Calu3 (cell line): ENCODE measurements at regions of chr12 and their contacts with region 1.

Region 1: DNA sequence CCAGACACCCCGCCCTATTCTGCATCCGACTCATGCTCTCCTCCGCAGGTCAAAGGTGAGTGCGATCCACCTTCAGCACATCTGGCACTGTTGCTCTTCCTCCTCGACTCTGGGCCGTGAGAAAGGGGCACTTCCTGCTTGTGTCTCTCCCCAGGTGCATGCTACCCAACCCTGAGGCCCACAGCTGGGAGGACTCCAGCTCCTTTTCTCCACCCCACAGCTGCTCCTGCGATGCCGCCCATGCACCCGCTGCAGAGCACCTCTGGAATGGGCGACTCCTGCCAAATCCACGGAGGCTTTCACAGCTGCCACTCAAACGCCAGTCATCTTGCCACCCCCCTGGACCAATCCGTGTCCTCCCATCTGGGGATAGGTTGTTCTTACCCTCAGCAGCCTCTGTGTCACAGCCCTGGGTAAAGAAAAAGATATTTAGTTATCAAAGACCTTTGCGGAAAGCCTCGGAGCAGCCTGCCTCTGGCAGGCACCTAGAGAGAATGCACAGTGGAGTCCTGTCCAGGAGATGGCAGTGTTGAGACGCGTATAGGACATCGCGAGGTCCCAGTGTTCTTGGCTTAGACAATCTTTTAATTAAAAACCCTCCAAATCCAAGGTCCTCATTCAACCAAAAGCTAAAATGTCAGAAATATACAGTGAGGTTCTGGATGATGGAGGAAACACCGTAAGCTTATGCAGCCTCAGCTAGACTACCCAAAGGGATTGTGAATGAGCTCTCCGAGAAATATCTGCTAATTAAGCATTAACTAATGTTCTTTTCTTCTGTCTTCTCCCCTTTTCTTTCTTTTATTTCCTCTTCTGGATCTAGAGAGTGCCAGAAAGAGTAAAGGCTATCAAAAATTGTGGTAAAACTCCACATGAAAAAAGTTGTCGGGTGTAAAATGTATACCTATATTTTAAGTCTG is 54.3 kb downstream of the MYRFL start:
- DNase-seq: peak; percentile 81
- H3K4me3 Mint-ChIP-seq: peak overlapping the region; percentile 71
- H3K27ac Mint-ChIP-seq: peak overlapping the region; percentile 59
- H3K4me1 Mint-ChIP-seq: peaks cover 22% of the 10 kb centered on the region
- H3K27me3 Mint-ChIP-seq: no peaks in the 10 kb centered on the region
- CTCF ChIP-seq: peak; percentile 93

Region 2: DNA sequence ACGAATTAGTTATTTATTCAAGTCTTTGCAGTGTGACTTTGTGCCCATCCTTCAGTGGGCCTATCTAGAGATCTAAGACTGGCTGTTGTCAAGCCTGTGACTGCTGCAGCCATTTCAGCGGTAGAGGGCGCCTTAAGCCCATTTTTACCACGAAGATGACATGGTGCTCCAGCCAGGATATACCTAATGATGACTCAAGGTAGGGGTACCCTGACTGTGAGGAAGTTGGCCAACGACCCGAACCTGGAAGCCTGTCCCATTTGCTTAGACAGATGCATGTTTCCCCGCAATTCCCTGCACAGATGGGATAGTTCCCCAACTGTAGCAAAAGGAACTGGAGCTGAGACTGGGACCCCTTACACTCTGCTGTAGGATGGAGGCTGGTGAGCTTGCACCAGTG is 99.4 kb before region 1 on chr12:
- CTCF ChIA-PET with region 1: interaction called, 4 read pairs
- intact Hi-C with region 1: loop called (anchors 5 kb)
- DNase-seq: peak; percentile 74
- H3K4me3 Mint-ChIP-seq: no peak overlapping the region
- H3K27ac Mint-ChIP-seq: no peak overlapping the region
- H3K4me1 Mint-ChIP-seq: peaks cover 43% of the 10 kb centered on the region
- H3K27me3 Mint-ChIP-seq: no peaks in the 10 kb centered on the region
- CTCF ChIP-seq: peak; percentile 74

Region 3: GRCh38 chr12:70365648-70366518 is 486.6 kb after region 1 on chr12 and contains the start of gene KCNMB4:
- CTCF ChIA-PET with region 1: no interaction called
- intact Hi-C with region 1: loop called (anchors 5 kb)
- DNase-seq: peak; percentile 93
- H3K4me3 Mint-ChIP-seq: peak within 1 kb of the TSS; percentile 99
- H3K27ac Mint-ChIP-seq: peak within 1 kb of the TSS; percentile 86
- H3K4me1 Mint-ChIP-seq: peaks cover 18% of the 10 kb centered on the region
- H3K27me3 Mint-ChIP-seq: no peaks in the 10 kb centered on the region
- CTCF ChIP-seq: no peak
- total RNA-seq, gene KCNMB4: 6.4 and 8.4 TPM in 2 replicates

Region 4: DNA sequence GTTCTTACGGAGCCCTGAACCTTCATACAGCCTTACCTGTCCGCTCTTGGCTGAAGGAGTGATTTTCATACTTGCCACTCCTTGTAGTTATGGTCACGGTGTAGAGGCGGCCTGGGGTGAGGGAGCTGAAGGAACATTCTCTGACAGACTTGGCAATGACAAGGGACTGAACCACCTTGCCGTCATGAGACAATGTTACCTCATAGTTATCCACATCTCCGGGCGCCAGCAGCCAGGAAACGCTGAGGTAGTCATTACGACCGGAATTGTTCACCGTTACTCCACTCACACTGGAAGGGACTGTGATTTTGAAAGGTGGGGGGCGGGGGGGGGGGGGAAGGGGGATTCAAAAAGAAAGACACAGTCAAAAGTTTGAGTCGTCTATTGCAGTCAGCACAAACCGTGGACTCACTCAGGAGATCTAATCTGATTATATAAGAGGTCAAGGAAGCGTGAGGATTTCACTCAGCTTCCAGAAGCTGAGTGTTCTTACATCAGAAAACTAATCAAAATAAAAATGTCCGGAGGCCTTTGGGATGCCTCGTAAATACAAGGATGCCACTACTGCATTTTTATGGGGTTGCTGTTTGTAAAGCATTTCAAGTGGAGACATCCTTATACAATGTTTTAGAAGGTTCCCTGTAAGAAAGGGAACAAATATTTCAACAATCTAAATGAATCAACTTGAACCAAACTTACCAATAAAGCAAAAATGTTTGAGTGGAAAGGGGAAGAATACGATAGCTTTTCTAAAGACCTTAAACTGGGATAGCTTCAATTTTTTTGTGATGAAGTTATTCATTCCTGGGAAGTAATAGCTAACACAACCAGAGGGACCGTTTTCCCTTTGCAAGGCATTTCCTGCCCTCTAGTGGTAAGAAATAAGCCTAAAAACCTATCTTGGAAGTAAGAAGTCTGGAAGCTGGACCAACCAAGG is 697.3 kb after region 1 on chr12:
- CTCF ChIA-PET with region 1: interaction called, 12 read pairs
- intact Hi-C with region 1: loop called (anchors 1 kb)
- DNase-seq: peak; percentile 12
- H3K4me3 Mint-ChIP-seq: no peak overlapping the region
- H3K27ac Mint-ChIP-seq: no peak overlapping the region
- H3K4me1 Mint-ChIP-seq: no peaks in the 10 kb centered on the region
- H3K27me3 Mint-ChIP-seq: no peaks in the 10 kb centered on the region
- CTCF ChIP-seq: peak; percentile 70

Region 5: DNA sequence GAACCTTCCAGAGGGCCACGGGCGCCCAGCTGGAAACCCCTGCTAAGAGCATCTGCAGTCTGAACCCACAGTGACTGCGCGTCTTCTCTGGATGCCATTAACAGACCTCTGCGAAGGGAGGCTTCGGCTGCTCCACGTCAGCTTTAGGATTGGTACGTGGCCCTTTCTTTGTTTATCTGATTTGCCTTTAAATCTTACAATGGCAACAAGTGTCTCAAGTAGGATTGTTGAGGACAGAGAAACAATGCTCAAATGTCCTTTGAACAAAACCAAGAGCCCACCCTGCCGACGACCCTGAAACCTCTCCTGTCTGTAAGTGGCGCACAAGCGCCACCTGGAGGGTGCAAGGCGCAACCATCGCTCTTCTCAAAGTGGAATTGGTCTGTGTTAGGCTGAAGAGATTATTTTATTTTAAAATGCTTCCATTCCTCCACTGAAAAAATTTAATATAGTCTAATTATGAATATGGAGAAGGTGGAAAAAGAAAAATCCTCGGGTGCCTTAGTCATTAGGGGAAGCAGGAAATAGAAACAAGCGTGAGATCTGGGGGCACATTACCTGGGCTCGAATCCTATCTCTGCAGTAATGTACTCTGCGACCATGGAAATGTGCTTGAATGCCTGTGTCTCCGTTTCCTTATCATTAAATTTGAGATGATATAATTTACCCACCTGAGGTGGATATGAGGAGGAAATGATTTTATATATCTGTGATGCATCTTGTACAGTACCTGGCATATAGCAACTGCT is 840.5 kb after region 1 on chr12:
- CTCF ChIA-PET with region 1: no interaction called
- intact Hi-C with region 1: loop called (anchors 5 kb)
- DNase-seq: peak; percentile 41
- H3K4me3 Mint-ChIP-seq: no peak overlapping the region
- H3K27ac Mint-ChIP-seq: no peak overlapping the region
- H3K4me1 Mint-ChIP-seq: no peaks in the 10 kb centered on the region
- H3K27me3 Mint-ChIP-seq: no peaks in the 10 kb centered on the region
- CTCF ChIP-seq: peak; percentile 88

Region 6: DNA sequence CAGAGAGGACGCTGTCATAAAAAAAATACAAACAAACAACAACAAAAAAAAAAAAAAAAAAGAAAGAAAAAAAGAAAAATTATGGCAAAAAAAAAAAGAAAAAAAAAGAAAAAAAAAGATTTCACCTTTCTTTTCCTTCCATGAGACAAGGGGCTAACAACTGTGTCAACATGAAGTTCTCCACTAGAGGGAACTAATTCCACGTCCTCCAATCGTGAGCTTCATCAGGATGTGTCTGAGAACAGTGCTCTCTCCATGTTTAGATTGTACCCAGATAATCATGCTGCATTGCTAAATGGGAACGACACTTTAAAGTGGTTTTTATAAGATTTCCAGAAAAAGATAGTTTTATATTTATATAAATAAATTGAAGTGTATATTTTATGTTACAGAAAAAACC is 854.1 kb after region 1 on chr12:
- CTCF ChIA-PET with region 1: no interaction called
- intact Hi-C with region 1: loop called (anchors 2 kb)
- DNase-seq: peak; percentile 48
- H3K4me3 Mint-ChIP-seq: no peak overlapping the region
- H3K27ac Mint-ChIP-seq: no peak overlapping the region
- H3K4me1 Mint-ChIP-seq: peaks cover 10% of the 10 kb centered on the region
- H3K27me3 Mint-ChIP-seq: no peaks in the 10 kb centered on the region
- CTCF ChIP-seq: peak; percentile 57